ENCODE measurements at regions of chr17 and their contacts with region 1.

Region 1: GRCh38 chr17:28726226-28727130 is at the start of gene TLCD1:
- DNase-seq: peak; percentile 95
- ATAC-seq: peak; percentile 50
- H3K4me3 Mint-ChIP-seq: peak within 1 kb of the TSS; percentile 100
- H3K27ac Mint-ChIP-seq: peak within 1 kb of the TSS; percentile 99
- H3K4me1 Mint-ChIP-seq: peaks cover 39% of the 10 kb centered on the region
- H3K27me3 Mint-ChIP-seq: no peaks in the 10 kb centered on the region
- CTCF ChIP-seq: peak; percentile 100
- total RNA-seq, gene TLCD1: 6.5 to 8.7 TPM

Region 2: GRCh38 chr17:28710861-28711722 is 15.4 kb before region 1 on chr17:
- CTCF ChIA-PET with region 1: interaction called, 20 read pairs
- POLR2A ChIA-PET with region 1: interaction called, 65 read pairs
- intact Hi-C with region 1: no loop called
- DNase-seq: peak; percentile 92
- ATAC-seq: peak; percentile 92
- H3K4me3 Mint-ChIP-seq: peak overlapping the region; percentile 89
- H3K27ac Mint-ChIP-seq: peak overlapping the region; percentile 95
- H3K4me1 Mint-ChIP-seq: peaks cover 13% of the 10 kb centered on the region
- H3K27me3 Mint-ChIP-seq: peaks cover 9% of the 10 kb centered on the region
- CTCF ChIP-seq: no peak

Region 3: DNA sequence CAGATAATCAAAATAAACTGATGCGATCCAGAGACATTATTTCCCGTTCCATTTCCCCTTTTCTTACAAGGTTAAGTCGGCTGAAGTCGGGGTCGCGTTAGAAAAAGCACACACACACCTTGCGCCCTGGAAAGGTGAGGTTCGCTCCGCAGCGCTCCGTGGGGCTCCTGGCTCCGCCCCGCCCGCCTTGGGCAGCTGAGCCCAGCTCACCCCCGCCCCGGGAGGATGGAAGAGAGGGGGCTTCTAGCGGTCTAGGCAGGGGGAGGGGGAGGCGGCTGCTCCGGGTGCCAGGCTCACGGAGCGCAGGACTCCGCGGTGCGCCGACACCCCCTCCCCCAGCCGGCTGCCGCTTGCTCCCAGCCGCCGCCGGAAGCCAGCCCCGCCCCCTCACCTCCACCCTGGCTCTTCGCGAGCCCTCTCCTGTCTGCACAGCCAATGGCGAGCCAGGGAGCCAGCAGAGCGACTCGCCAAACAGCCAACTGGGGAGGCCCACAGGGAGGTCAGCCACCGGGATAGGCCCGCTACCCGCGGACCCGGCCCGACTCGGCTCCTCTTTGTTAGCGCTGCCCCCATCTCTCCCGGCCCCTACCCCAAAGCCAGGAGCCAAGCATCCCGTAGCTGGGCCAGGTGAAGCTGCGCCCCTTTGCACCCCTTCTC is 85.7 kb after region 1 on chr17:
- CTCF ChIA-PET with region 1: interaction called, 19 read pairs
- POLR2A ChIA-PET with region 1: interaction called, 5 read pairs
- intact Hi-C with region 1: loop called (anchors 5 kb)
- DNase-seq: peak; percentile 98
- ATAC-seq: peak; percentile 100
- H3K4me3 Mint-ChIP-seq: peak overlapping the region; percentile 90
- H3K27ac Mint-ChIP-seq: peak overlapping the region; percentile 91
- H3K4me1 Mint-ChIP-seq: peaks cover 43% of the 10 kb centered on the region
- H3K27me3 Mint-ChIP-seq: no peaks in the 10 kb centered on the region
- CTCF ChIP-seq: no peak

Region 4: DNA sequence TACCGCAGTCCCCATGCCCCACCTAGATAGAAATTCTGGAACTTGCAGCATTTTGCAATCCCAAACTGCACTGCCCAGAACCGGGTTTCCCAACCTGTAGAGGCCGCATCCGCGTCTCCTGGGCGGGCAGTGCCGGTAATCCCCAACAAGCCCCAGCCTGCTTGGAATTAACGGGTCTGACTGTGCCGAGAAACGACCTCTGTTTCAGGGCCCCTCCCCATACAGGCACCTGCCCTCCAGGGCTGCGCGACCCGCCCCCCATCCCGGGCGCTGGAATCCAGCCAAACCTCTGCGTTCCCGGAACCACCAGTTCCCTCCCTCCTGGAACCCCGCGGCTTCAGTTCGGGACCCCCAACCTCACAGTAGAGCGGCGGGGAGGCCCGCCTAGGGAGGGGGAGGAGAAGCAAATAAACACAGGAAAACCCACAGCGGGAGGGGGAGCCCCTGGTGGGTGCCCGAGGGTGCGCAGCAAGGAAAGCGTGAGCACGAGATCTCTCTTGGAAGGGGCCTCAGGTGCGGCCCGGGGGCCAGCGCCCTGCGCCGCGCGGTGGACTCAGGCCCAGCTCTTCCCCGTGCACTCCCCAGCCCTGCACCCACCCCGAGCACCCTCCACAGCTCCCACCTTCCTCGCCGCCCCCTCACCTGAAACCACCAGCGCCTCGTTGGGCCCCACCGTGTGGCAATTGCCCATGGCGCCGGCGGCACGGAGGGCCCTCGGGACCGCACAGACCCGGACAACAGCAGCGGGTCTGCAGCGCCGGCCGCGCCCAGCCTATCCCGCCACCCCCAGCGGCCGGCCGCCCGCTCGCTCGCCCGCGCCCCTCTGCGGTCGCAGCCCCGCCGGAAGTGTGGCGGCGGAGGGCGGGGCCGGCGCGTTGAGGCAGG is 170.6 kb after region 1 on chr17 and contains the start of gene FLOT2:
- CTCF ChIA-PET with region 1: interaction called, 19 read pairs
- POLR2A ChIA-PET with region 1: interaction called, 8 read pairs
- intact Hi-C with region 1: loop called (anchors 5 kb)
- DNase-seq: peak; percentile 83
- ATAC-seq: peak; percentile 66
- H3K4me3 Mint-ChIP-seq: peak within 1 kb of the TSS; percentile 94
- H3K27ac Mint-ChIP-seq: peak within 1 kb of the TSS; percentile 93
- H3K4me1 Mint-ChIP-seq: peaks cover 64% of the 10 kb centered on the region
- H3K27me3 Mint-ChIP-seq: no peaks in the 10 kb centered on the region
- CTCF ChIP-seq: peak; percentile 38
- total RNA-seq, gene FLOT2: 59.7 to 60.1 TPM

Region 5: GRCh38 chr17:28925912-28926365 is 199.5 kb after region 1 on chr17:
- CTCF ChIA-PET with region 1: interaction called, 17 read pairs
- POLR2A ChIA-PET with region 1: interaction called, 4 read pairs
- intact Hi-C with region 1: no loop called
- DNase-seq: peak; percentile 59
- ATAC-seq: peak; percentile 85
- H3K4me3 Mint-ChIP-seq: peak overlapping the region; percentile 31
- H3K27ac Mint-ChIP-seq: peak overlapping the region; percentile 82
- H3K4me1 Mint-ChIP-seq: peaks cover 59% of the 10 kb centered on the region
- H3K27me3 Mint-ChIP-seq: no peaks in the 10 kb centered on the region
- CTCF ChIP-seq: no peak

Region 6: DNA sequence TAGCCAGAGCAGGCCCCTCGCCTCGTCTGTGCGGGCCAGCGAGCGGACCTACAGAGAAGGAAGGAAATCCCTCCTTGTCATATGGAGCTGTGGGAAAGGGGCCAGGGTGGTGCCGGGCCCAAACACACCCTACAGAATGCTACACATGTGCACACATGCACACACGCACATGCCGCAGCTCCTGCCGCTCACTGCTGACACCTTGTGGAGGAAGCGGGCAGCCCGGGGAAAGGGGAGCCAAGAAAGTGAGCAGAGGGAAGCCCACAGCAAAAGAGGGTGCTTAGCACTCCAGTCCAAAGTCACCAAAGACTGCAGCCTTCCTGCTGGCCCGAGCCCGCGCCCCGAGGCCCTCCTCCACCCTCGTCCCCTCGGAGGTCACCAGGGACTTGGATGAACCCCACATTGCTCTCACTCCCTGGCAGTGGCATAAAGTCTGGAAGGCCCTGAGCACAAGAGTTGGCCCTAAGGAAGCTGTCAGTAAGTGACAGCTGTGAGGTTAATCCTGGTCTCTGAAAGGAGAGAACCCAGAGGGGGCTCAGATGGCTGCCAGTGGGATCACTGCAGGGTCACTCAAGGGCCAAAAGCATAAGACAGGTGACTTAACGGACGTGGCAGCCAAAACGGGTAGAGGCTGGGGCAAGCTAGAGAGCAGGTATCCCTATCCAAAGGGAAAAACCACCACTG is 385.5 kb after region 1 on chr17:
- CTCF ChIA-PET with region 1: interaction called, 11 read pairs
- POLR2A ChIA-PET with region 1: no interaction called
- intact Hi-C with region 1: no loop called
- DNase-seq: peak; percentile 79
- ATAC-seq: peak; percentile 87
- H3K4me3 Mint-ChIP-seq: no peak overlapping the region
- H3K27ac Mint-ChIP-seq: no peak overlapping the region
- H3K4me1 Mint-ChIP-seq: peaks cover 9% of the 10 kb centered on the region
- H3K27me3 Mint-ChIP-seq: no peaks in the 10 kb centered on the region
- CTCF ChIP-seq: peak; percentile 91

Measured in activated CD8-positive, alpha-beta T cell treated with anti-CD3 and anti-CD28 coated beads for 36 hours (primary cell).